ENCODE measurements at regions of chr1 and their contacts with region 1.

Region 1: DNA sequence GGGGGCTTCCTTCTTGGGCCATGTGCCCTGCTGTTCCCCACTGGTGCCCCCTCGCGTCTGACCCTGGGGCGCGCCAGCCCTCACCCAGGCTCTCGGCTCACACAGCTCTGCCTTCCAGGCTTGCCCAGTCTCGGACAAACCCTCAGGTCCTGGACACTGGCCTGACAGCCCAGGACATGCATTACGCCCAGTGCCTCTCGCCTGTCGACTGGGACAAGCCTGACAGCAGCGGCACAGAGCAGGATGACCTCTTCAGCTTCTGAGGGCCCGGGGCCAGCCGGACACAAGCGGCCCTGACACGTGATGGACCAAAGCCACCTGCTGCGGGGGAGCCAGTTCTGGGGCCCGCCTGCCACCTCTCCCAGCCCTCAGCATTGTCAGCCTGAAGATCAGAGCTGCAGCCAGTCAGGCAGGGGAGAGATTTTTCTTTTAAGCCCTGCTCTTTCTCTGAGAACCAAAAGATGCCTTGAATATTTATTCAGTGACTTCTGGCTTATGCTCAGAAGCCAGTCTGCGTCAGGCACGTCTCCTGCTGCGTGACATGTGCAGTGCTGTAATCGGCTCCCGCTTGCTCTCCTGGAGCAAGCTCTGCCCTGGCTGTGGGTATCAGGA is 23.4 kb downstream of the LDLRAP1 start:
- DNase-seq: peak in 1 of 2 donors; percentile 77
- ATAC-seq: peak; percentile 74
- H3K4me3 ChIP-seq: no peak overlapping the region
- H3K27ac ChIP-seq: peak overlapping the region; percentile 36 to 87
- H3K4me1 ChIP-seq: no peaks in the 10 kb centered on the region
- H3K27me3 ChIP-seq: no peaks in the 10 kb centered on the region

Region 2: GRCh38 chr1:25369241-25369640 is 197.6 kb before region 1 on chr1:
- intact Hi-C with region 1: no loop called
- DNase-seq: no peak
- ATAC-seq: no peak
- H3K4me3 ChIP-seq: no peak overlapping the region
- H3K27ac ChIP-seq: no peak overlapping the region
- H3K4me1 ChIP-seq: no peaks in the 10 kb centered on the region
- H3K27me3 ChIP-seq: no peaks in the 10 kb centered on the region

Region 3: GRCh38 chr1:25590096-25590824 is 23.4 kb after region 1 on chr1:
- intact Hi-C with region 1: loop called in 1 of 2 experiments (anchors 2 kb)
- DNase-seq: peak; percentile 76 to 85
- ATAC-seq: peak; percentile 87
- H3K4me3 ChIP-seq: no peak overlapping the region
- H3K27ac ChIP-seq: peak overlapping the region; percentile 39 to 50
- H3K4me1 ChIP-seq: no peaks in the 10 kb centered on the region
- H3K27me3 ChIP-seq: no peaks in the 10 kb centered on the region

Region 4: GRCh38 chr1:25664357-25665199 is 97.7 kb after region 1 on chr1:
- intact Hi-C with region 1: no loop called
- DNase-seq: no peak
- ATAC-seq: no peak
- H3K4me3 ChIP-seq: no peak overlapping the region
- H3K27ac ChIP-seq: no peak overlapping the region
- H3K4me1 ChIP-seq: peaks cover 0 to 4% of the 10 kb centered on the region in 2 donors
- H3K27me3 ChIP-seq: no peaks in the 10 kb centered on the region